ENCODE measurements at regions of chr16 and their contacts with region 1.

Region 1: DNA sequence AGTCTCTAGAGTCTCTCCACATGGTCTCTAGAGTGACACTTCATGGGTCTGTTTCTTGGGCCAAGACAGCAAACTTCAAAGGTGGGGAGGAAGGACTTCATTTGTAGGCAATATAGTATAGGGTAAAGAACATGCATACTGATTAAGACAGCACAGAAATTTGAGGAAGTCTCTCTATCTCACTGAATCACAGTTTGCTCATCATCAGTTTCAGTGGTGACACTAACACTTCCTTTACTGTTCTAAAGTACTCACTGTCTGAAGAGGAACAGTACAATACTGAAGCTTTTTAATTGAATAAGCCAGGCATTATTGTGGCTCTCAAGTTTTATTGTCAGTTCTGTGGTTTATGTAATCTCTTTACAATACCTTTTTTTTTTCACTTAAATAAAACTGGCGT is 656.4 kb upstream of the CDH8 start:
- DNase-seq: no peak
- H3K4me3 ChIP-seq: no peak overlapping the region
- H3K27ac ChIP-seq: no peak overlapping the region
- H3K4me1 ChIP-seq: no peaks in the 10 kb centered on the region
- H3K27me3 ChIP-seq: no peaks in the 10 kb centered on the region
- CTCF ChIP-seq: no peak
- POLR2A ChIP-seq: no peak

Region 2: DNA sequence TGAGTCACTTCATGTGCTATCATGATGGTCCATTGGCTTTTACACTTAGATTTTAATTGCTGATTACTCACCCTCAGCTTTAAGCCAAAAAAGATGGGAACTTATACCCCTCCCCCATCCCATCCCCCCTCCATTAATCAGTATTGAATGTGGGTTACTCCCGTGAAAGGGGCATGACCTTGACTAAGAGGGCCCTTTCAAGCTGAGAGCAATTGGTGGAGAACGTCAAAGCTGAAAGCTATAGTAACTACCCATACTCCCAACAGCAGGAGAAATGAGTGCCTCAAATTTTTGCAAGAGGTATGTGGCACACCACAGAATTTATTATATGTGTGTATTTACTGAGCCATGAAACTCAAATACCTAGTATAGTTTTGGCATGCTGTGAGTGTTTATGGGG is 556.8 kb before region 1 on chr16:
- intact Hi-C with region 1: no loop called
- DNase-seq: no peak
- H3K4me3 ChIP-seq: no peak overlapping the region
- H3K27ac ChIP-seq: no peak overlapping the region
- H3K4me1 ChIP-seq: no peaks in the 10 kb centered on the region
- H3K27me3 ChIP-seq: no peaks in the 10 kb centered on the region
- CTCF ChIP-seq: no peak
- POLR2A ChIP-seq: no peak

Region 3: GRCh38 chr16:62386411-62386810 is 306.3 kb before region 1 on chr16:
- intact Hi-C with region 1: no loop called
- DNase-seq: no peak
- H3K4me3 ChIP-seq: no peak overlapping the region
- H3K27ac ChIP-seq: no peak overlapping the region
- H3K4me1 ChIP-seq: no peaks in the 10 kb centered on the region
- H3K27me3 ChIP-seq: no peaks in the 10 kb centered on the region
- CTCF ChIP-seq: no peak
- POLR2A ChIP-seq: no peak

Region 4: GRCh38 chr16:62732092-62732491 is 39.4 kb after region 1 on chr16:
- intact Hi-C with region 1: loop called (anchors 1 kb)
- DNase-seq: no peak
- H3K4me3 ChIP-seq: no peak overlapping the region
- H3K27ac ChIP-seq: no peak overlapping the region
- H3K4me1 ChIP-seq: no peaks in the 10 kb centered on the region
- H3K27me3 ChIP-seq: no peaks in the 10 kb centered on the region
- CTCF ChIP-seq: no peak
- POLR2A ChIP-seq: no peak

Measured in breast epithelium (tissue), 4 donors.